Activated naive CD4-positive, alpha-beta T cell treated with anti-CD3 and anti-CD28 coated beads, Interleukin-2, amount 10 ng/mL, durations not matched to agents 7 days and 5 days (primary cell): ENCODE measurements at regions of chr3 and their contacts with region 1.

Region 1: DNA sequence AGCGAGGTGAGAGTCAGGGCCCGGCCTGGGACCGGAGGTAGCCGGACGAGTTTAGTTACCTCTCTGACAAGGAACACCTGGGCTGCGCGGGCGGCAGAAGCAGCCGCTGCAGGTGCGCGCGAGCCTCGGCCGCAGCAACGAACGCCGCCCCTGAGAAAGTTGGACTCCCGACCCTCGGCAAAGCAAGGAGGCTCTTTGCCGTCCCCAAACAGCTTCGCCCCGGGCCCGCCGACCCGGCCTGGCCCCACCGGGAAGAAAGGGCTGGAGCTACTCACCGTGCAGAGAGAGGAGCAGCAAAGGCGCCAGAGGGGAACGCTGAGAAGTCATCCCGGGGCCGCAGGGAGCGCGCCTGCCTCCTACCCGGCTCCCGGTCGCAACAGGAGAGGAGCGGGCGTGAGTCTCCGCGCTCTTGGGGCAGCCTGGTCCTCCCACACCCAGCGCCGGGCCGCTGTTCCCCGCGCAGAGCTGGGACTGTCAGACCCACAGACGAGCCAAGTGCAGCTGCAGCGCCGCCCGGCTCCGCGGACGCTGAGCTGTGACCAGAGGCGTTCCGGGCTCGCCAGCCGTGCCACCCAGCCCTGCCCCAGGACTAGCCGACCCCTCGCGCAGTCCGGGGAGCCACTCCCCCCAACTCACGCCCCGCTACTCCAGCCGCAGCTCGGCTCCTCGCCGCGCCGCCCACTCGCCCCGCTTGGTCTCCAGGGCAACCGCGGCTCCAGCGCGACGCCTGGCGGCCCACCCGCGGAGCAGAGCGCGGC is at the start of gene IGSF11:
- DNase-seq: peak; percentile 77
- H3K4me3 Mint-ChIP-seq: peak within 1 kb of the TSS; percentile 82
- H3K27ac Mint-ChIP-seq: no peak within 1 kb of the TSS
- H3K4me1 Mint-ChIP-seq: peaks cover 11% of the 10 kb centered on the region
- H3K27me3 Mint-ChIP-seq: peaks cover 52% of the 10 kb centered on the region

Region 2: GRCh38 chr3:118890186-118890585 is 144.2 kb before region 1 on chr3:
- CTCF ChIA-PET with region 1: interaction called, 348 read pairs
- DNase-seq: no peak
- H3K4me3 Mint-ChIP-seq: no peak overlapping the region
- H3K27ac Mint-ChIP-seq: no peak overlapping the region
- H3K4me1 Mint-ChIP-seq: peaks cover 10% of the 10 kb centered on the region
- H3K27me3 Mint-ChIP-seq: no peaks in the 10 kb centered on the region

Region 3: DNA sequence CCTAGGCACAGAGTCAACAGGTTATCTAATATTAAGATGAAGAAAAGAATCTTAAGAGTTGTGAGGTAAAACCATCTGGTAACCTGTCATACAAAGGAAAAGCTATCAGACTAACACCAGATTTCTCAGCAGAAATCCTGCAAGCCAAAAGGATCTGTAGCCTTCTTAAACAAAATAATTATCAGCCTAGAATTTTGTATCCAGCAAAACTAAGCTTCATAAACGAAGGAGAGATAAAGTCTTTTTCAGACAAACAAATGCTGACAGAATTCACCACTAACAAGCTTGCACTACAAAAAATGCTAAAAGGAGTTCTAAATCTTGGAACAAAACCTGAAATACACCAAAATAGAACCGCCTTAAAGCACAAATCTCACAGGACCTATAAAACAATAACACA is 10.2 kb after region 1 on chr3:
- CTCF ChIA-PET with region 1: interaction called, 16 read pairs
- DNase-seq: no peak
- H3K4me3 Mint-ChIP-seq: no peak overlapping the region
- H3K27ac Mint-ChIP-seq: no peak overlapping the region
- H3K4me1 Mint-ChIP-seq: no peaks in the 10 kb centered on the region
- H3K27me3 Mint-ChIP-seq: peaks cover 15% of the 10 kb centered on the region

Region 4: GRCh38 chr3:119098619-119099222 is 64.3 kb after region 1 on chr3:
- CTCF ChIA-PET with region 1: interaction called, 14 read pairs
- DNase-seq: no peak
- H3K4me3 Mint-ChIP-seq: no peak overlapping the region
- H3K27ac Mint-ChIP-seq: no peak overlapping the region
- H3K4me1 Mint-ChIP-seq: no peaks in the 10 kb centered on the region
- H3K27me3 Mint-ChIP-seq: peaks cover 5% of the 10 kb centered on the region

Region 5: GRCh38 chr3:119240591-119241434 is 206.4 kb after region 1 on chr3 and contains the start of gene B4GALT4:
- CTCF ChIA-PET with region 1: interaction called, 16 read pairs
- DNase-seq: peak; percentile 83
- H3K4me3 Mint-ChIP-seq: peak within 1 kb of the TSS; percentile 78
- H3K27ac Mint-ChIP-seq: peak within 1 kb of the TSS; percentile 88
- H3K4me1 Mint-ChIP-seq: peaks cover 46% of the 10 kb centered on the region
- H3K27me3 Mint-ChIP-seq: no peaks in the 10 kb centered on the region

Region 6: DNA sequence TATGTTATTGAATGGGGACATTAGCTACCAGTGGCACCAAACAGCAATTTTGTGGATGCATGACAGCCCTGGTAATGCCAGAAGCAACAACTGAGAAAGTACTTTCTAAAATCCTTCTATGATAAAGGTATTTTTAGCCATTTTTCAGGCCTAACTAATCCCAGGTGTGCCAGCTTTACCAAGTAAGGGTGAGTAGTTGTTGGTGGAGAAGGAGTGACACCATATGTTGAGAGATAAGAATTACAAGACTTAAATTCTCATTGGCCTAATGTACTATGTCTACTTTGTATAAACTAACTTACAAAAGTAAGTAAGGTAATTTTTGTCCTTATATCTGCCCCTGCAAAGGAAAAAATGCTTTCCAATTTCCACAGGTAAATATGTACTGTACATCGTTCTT is 646.8 kb after region 1 on chr3:
- CTCF ChIA-PET with region 1: interaction called, 14 read pairs
- DNase-seq: no peak
- H3K4me3 Mint-ChIP-seq: no peak overlapping the region
- H3K27ac Mint-ChIP-seq: no peak overlapping the region
- H3K4me1 Mint-ChIP-seq: peaks cover 11% of the 10 kb centered on the region
- H3K27me3 Mint-ChIP-seq: no peaks in the 10 kb centered on the region